ENCODE measurements at regions of chrX and their contacts with region 1.

Region 1: DNA sequence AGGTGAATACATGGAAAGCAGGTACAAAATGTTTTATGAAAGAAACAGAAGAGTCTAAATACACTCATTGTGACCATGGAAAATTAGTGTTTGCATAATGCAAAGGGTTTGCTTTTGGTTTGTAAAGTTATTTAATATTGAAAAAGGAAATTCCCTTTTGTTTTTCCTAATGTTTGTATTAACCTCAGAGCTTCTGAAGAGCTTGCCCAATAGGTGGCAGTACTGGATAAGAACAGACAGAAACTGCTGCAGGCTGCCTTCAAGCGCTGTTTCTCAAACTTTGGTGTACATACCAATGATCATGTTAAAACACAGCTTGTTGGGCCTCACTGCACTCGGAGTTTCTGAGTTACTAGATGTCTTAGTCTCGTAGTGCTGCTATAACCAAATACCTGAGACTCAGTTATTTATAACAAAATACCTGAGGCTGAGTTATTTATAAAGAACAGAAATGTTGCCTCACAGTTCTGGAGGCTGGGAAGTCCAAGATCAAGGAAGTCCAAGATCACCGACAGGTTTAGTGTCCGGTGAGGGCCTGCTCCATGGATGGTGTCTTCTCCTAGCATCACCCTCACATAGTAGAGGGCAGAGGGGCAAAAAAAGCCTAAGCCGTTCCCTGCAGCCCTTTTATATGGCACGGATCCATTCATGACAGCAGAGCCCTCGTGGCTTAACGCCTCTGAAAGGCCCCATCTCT is 54.2 kb downstream of the SUPT20HL2 start:
- DNase-seq: peak in 4 of 14 experiments; percentile 15 to 54 (median 38)
- ATAC-seq: no peak
- H3K4me3 ChIP-seq: no peak overlapping the region
- H3K4me3 Mint-ChIP-seq: no peak overlapping the region
- H3K27ac ChIP-seq: no peak overlapping the region
- H3K27ac Mint-ChIP-seq: no peak overlapping the region
- H3K4me1 ChIP-seq: peaks cover 10% of the 10 kb centered on the region
- H3K4me1 Mint-ChIP-seq: peaks cover 9% of the 10 kb centered on the region
- H3K27me3 ChIP-seq: no peaks in the 10 kb centered on the region
- H3K27me3 Mint-ChIP-seq: no peaks in the 10 kb centered on the region
- CTCF ChIP-seq: peak; percentile 50

Region 2: DNA sequence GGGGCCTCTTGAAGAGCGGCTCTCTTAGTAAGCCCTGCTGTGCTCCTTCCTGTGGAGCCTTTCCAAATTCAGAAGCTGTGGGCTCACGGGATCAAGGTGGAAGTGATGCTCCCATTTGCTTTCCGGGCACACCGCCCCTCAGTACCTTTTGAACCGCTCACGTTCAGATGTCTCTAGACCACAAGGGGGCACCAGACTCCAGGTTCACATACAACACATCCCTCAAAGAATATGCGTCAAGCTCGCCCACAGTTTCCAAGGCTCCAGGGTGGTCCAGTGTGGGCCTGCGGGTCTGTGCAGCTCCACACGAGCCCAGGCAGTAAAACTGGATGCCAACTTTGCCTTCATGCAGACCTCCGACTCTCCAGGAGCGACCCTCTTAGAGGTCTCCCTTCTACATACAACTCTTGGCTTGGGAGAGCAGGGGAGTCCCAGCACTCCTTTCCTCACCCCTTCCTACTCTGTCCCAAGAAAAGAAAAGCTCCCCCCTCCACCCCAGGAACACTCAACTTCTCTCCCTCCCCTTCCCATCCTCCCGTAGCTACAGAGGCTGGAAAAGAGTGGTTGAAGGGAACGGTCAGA is 111.8 kb after region 1 on chrX:
- CTCF ChIA-PET with region 1: no interaction called
- POLR2A ChIA-PET with region 1: no interaction called
- intact Hi-C with region 1: loop called in 1 of 2 experiments (anchors 5 kb)
- DNase-seq: peak; percentile 24 to 78 (median 40)
- ATAC-seq: peak; percentile 73
- H3K4me3 ChIP-seq: no peak overlapping the region
- H3K4me3 Mint-ChIP-seq: no peak overlapping the region
- H3K27ac ChIP-seq: no peak overlapping the region
- H3K27ac Mint-ChIP-seq: no peak overlapping the region
- H3K4me1 ChIP-seq: peaks cover 6% of the 10 kb centered on the region
- H3K4me1 Mint-ChIP-seq: peaks cover 6% of the 10 kb centered on the region
- H3K27me3 ChIP-seq: no peaks in the 10 kb centered on the region
- H3K27me3 Mint-ChIP-seq: no peaks in the 10 kb centered on the region
- CTCF ChIP-seq: peak; percentile 58

Measured in CD4-positive, alpha-beta T cell (primary cell).